PC-3 (cell line): ENCODE measurements at regions of chr2 and their contacts with region 1.

Region 1: GRCh38 chr2:213806125-213806726 is 522.0 kb downstream of the SPAG16 start:
- DNase-seq: peak; percentile 71
- ATAC-seq: no peak; the same call in 1 of the 2 replicates
- H3K4me3 ChIP-seq: no peak overlapping the region
- H3K27ac ChIP-seq: no peak overlapping the region
- H3K4me1 ChIP-seq: no peaks in the 10 kb centered on the region
- H3K27me3 ChIP-seq: no peaks in the 10 kb centered on the region
- CTCF ChIP-seq: peak; percentile 73

Region 2: GRCh38 chr2:214069265-214069664 is 263.0 kb after region 1 on chr2:
- CTCF ChIA-PET with region 1: no interaction called
- POLR2A ChIA-PET with region 1: no interaction called
- intact Hi-C with region 1: loop called (anchors 5 kb)
- DNase-seq: peak; percentile 97
- ATAC-seq: peak; percentile 93
- H3K4me3 ChIP-seq: peak overlapping the region; percentile 53
- H3K27ac ChIP-seq: peak overlapping the region; percentile 88
- H3K4me1 ChIP-seq: peaks cover 49% of the 10 kb centered on the region
- H3K27me3 ChIP-seq: no peaks in the 10 kb centered on the region
- CTCF ChIP-seq: no peak

Region 3: GRCh38 chr2:214410918-214411554 is 604.8 kb after region 1 on chr2 and contains the start of gene VWC2L:
- CTCF ChIA-PET with region 1: interaction called, 4 read pairs
- POLR2A ChIA-PET with region 1: no interaction called
- intact Hi-C with region 1: loop called (anchors 2 kb)
- DNase-seq: peak; percentile 87
- ATAC-seq: peak; percentile 100
- H3K4me3 ChIP-seq: no peak within 1 kb of the TSS
- H3K27ac ChIP-seq: no peak within 1 kb of the TSS
- H3K4me1 ChIP-seq: 0 out of 2 replicates have a peak, but pooled peaks cover 4% of the 10 kb centered on the region
- H3K27me3 ChIP-seq: no peaks in the 10 kb centered on the region
- CTCF ChIP-seq: no peak
- total RNA-seq, gene VWC2L: not detected in 2 replicates

Region 4: GRCh38 chr2:214830794-214831346 is 1024.6 kb after region 1 on chr2:
- CTCF ChIA-PET with region 1: no interaction called
- POLR2A ChIA-PET with region 1: no interaction called
- intact Hi-C with region 1: loop called (anchors 10 kb)
- DNase-seq: peak; percentile 52
- ATAC-seq: peak; percentile 65
- H3K4me3 ChIP-seq: no peak overlapping the region
- H3K27ac ChIP-seq: no peak overlapping the region
- H3K4me1 ChIP-seq: no peaks in the 10 kb centered on the region
- H3K27me3 ChIP-seq: no peaks in the 10 kb centered on the region
- CTCF ChIP-seq: peak; percentile 65

Region 5: DNA sequence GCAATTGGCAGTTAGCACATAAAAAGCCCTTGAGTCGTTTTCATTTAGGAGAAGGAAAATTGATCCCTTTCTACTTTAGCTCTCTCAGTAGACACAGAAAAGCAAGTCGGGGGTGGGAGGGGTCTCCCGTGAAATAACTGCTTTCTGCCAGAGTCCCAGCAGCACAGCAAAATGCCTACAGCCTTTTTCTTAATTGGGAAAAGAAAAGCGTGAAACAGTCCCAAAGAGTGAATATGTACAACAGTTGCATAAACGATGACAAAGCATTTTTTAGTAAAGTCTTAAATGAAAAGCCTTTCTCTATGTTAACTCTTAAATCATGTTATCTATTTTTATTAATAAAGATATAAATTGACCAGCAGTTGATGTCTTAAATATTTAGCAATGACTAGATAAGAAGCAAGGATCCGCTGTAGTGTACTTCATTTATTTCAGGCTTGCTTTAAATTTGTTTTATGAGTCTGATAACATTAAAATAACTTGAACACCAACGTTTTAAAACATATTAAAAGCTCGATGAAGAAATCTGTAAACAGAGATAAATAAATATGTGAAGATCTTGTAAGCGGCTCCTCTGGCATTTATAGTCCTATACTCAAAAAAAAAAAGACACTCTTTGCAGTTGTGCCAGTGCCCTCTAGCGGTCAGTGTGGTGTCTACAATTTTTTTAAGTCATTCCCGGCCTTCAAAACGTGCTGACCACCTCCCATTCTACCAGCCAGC is 1463.3 kb after region 1 on chr2:
- CTCF ChIA-PET with region 1: no interaction called
- POLR2A ChIA-PET with region 1: no interaction called
- intact Hi-C with region 1: loop called (anchors 10 kb)
- DNase-seq: peak; percentile 82
- ATAC-seq: peak; percentile 31
- H3K4me3 ChIP-seq: no peak overlapping the region
- H3K27ac ChIP-seq: no peak overlapping the region
- H3K4me1 ChIP-seq: no peaks in the 10 kb centered on the region
- H3K27me3 ChIP-seq: no peaks in the 10 kb centered on the region
- CTCF ChIP-seq: peak; percentile 88